Activated CD4-positive, alpha-beta T cell treated with anti-CD3 and anti-CD28 coated beads, Interleukin-2, amount 10 ng/mL, durations not matched to agents 24 days and 14 days (primary cell): ENCODE measurements at regions of chr17 and their contacts with region 1.

Region 1: GRCh38 chr17:56833809-56834379 is at the starts of genes C17orf67 and DGKE:
- DNase-seq: peak; percentile 99
- H3K4me3 Mint-ChIP-seq: peak within 1 kb of the TSS; percentile 98
- H3K27ac Mint-ChIP-seq: peak within 1 kb of the TSS; percentile 96
- H3K4me1 Mint-ChIP-seq: peaks cover 51% of the 10 kb centered on the region
- H3K27me3 Mint-ChIP-seq: no peaks in the 10 kb centered on the region
- total RNA-seq, gene C17orf67: 3.7 and 4.4 TPM in 2 replicates
- total RNA-seq, gene DGKE: 33.0 and 33.6 TPM in 2 replicates

Region 2: DNA sequence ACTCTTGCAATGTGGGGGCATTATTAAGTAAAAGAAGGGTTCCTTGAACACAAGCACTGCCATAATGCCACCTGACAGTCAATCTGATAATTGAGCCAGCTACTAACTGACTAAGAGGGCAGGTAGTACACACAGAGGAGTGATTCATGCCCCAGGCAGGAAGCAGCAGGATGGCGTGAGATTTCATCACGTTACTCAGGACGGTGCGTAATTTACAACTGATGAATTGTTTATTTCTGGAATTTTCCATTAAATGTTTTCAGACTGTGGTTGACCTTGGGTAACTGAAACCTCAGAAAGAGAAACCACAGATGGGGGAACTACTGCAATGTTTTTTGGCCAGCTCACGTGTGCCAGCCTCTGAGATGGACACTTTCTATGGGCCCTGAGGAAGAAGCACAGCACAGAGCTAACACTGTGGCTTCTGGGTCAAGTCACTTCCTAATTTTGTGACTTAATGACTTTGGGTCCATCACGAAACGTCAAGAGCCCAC is 46.9 kb before region 1 on chr17:
- intact Hi-C with region 1: loop called (anchors 2 kb)
- DNase-seq: peak; percentile 82
- H3K4me3 Mint-ChIP-seq: peak overlapping the region; percentile 75
- H3K27ac Mint-ChIP-seq: peak overlapping the region; percentile 92
- H3K4me1 Mint-ChIP-seq: peaks cover 30% of the 10 kb centered on the region
- H3K27me3 Mint-ChIP-seq: peaks cover under 1% of the 10 kb centered on the region

Region 3: GRCh38 chr17:56819431-56820145 is 14.3 kb before region 1 on chr17:
- intact Hi-C with region 1: loop called (anchors 2 kb)
- DNase-seq: peak; percentile 93
- H3K4me3 Mint-ChIP-seq: no peak overlapping the region
- H3K27ac Mint-ChIP-seq: peak overlapping the region; percentile 44
- H3K4me1 Mint-ChIP-seq: peaks cover 9% of the 10 kb centered on the region
- H3K27me3 Mint-ChIP-seq: no peaks in the 10 kb centered on the region

Region 4: GRCh38 chr17:56913864-56914640 is 80.2 kb after region 1 on chr17 and contains the start of gene TRIM25:
- intact Hi-C with region 1: loop called (anchors 1 kb)
- DNase-seq: peak; percentile 94
- H3K4me3 Mint-ChIP-seq: peak within 1 kb of the TSS; percentile 97
- H3K27ac Mint-ChIP-seq: peak within 1 kb of the TSS; percentile 98
- H3K4me1 Mint-ChIP-seq: peaks cover 53% of the 10 kb centered on the region
- H3K27me3 Mint-ChIP-seq: no peaks in the 10 kb centered on the region
- total RNA-seq, gene TRIM25: 88.8 and 99.8 TPM in 2 replicates

Region 5: GRCh38 chr17:56939901-56940343 is 106.0 kb after region 1 on chr17:
- intact Hi-C with region 1: loop called (anchors 5 kb)
- DNase-seq: peak; percentile 70
- H3K4me3 Mint-ChIP-seq: no peak overlapping the region
- H3K27ac Mint-ChIP-seq: peak overlapping the region; percentile 63
- H3K4me1 Mint-ChIP-seq: peaks cover 19% of the 10 kb centered on the region
- H3K27me3 Mint-ChIP-seq: no peaks in the 10 kb centered on the region

Region 6: GRCh38 chr17:56960596-56961538 is 127.0 kb after region 1 on chr17 and contains the start of gene COIL:
- intact Hi-C with region 1: loop called (anchors 2 kb)
- DNase-seq: peak; percentile 98
- H3K4me3 Mint-ChIP-seq: peak within 1 kb of the TSS; percentile 84
- H3K27ac Mint-ChIP-seq: peak within 1 kb of the TSS; percentile 85
- H3K4me1 Mint-ChIP-seq: peaks cover 19% of the 10 kb centered on the region
- H3K27me3 Mint-ChIP-seq: peaks cover 2% of the 10 kb centered on the region
- total RNA-seq, gene COIL: 23.1 and 23.3 TPM in 2 replicates

Region 7: DNA sequence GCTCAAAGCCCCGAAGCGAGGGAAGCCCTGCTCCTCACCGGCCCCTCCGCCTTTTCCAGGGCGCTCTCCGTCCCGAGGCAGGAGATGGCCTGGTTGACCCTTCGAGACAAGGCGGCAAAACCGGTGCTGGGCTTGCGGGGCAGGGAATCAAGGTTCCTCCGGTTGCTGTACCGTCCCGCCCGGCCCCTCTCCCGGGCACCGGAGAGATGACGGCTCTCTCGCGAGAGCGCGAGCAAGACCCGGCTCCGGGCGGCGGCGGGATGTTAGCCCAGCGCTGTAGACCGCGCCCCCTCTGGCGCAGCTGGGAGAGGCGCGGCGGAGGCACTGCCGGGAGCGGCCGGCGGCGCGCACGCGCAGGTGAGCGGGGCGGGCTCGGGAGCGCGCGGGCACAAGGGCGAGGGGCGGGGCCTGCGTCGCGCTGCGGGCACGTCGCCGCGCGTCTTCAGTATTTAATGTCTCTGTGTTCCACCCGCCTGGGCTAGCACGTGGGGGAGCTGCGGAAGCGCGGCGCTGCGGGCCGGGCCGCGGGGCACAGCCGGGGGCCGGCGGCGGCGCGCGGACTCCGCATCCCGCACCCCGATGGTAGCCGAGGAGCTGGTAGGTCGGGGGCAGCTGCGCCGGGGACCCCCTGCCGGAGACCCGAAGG is 251.0 kb after region 1 on chr17 and contains the start of gene AKAP1:
- intact Hi-C with region 1: loop called (anchors 5 kb)
- DNase-seq: peak; percentile 99
- H3K4me3 Mint-ChIP-seq: peak within 1 kb of the TSS; percentile 93
- H3K27ac Mint-ChIP-seq: peak within 1 kb of the TSS; percentile 92
- H3K4me1 Mint-ChIP-seq: peaks cover 45% of the 10 kb centered on the region
- H3K27me3 Mint-ChIP-seq: peaks cover 10% of the 10 kb centered on the region
- total RNA-seq, gene AKAP1: 54.6 and 56.8 TPM in 2 replicates